Caco-2 (cell line): ENCODE measurements at regions of chr10 and their contacts with region 1.

Region 1: DNA sequence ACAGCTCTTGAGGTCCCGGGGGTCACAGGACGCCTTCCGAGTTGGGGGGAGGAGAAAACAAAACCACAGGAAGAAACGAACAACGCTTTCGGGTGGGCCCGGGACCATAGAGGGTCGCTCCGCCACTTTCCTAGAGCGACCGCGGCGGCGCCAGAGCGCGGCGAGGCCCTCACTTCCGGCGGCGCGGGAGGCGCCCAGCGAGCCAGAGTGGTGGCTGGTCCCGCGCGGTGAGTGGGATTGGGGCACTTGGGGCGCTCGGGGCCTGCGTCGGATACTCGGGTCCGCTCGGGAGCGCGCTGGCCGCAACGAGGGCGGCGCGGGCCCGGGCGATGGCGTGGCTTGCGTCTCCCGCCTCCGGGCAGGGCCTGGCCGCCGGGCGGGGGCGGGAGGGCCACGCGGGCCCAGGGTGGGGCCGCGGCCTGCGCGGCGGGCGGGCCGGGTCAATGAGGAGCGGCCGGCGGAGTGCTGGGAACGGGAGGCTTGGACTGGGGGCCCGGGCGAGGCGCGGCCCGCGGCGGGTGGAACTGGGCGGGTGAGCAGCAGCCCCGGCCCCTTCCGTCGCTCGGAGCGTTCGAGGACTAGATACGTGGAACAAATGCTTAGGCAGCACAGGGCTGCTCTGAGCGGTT is at the start of gene ZNF22:
- DNase-seq: peak; percentile 86 to 91
- H3K4me3 ChIP-seq: peak within 1 kb of the TSS; percentile 84
- H3K4me3 Mint-ChIP-seq: peak within 1 kb of the TSS; percentile 82
- H3K27ac Mint-ChIP-seq: peak within 1 kb of the TSS; percentile 94
- H3K4me1 ChIP-seq: peaks cover 31% of the 10 kb centered on the region
- H3K4me1 Mint-ChIP-seq: peaks cover 28% of the 10 kb centered on the region
- H3K27me3 ChIP-seq: no peaks in the 10 kb centered on the region
- H3K27me3 Mint-ChIP-seq: no peaks in the 10 kb centered on the region
- CTCF ChIP-seq: peak in 1 of 2 experiments; percentile 35
- total RNA-seq, gene ZNF22: 46.5 and 60.8 TPM in 2 replicates

Region 2: DNA sequence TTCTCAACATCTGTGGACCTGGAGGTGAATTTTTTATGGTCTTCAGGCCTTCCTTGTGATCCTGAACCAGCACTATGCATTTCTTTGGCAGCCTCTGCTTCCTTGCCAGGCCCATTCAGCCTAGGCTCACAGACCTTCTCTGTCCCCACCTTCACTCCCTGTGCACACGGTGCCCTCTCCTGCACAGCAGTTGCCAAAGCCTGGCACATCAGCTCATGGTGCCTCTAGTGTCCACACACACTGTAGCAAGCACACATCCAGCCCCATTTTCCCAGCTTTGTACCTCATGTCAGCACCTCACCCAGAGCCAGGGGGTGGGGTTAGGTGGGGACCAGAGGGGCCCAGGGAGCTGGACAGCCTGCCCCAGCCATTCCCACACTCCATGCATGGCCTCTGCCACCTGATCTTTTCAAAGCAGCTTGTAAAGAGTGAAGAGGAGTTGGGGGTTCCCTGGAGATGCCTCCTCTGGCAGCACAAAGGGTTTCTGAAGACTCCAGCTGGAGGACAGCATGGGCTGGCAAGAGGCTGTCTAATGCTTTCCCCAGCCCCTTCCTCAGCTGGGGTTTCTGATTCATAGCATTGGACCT is 147.6 kb before region 1 on chr10:
- CTCF ChIA-PET with region 1: no interaction called
- POLR2A ChIA-PET with region 1: no interaction called
- intact Hi-C with region 1: no loop called
- DNase-seq: no peak
- H3K4me3 ChIP-seq: no peak overlapping the region
- H3K4me3 Mint-ChIP-seq: no peak overlapping the region
- H3K27ac Mint-ChIP-seq: no peak overlapping the region
- H3K4me1 ChIP-seq: no peaks in the 10 kb centered on the region
- H3K4me1 Mint-ChIP-seq: no peaks in the 10 kb centered on the region
- H3K27me3 ChIP-seq: peaks cover 2% of the 10 kb centered on the region; the same call in 1 of the 2 replicates
- H3K27me3 Mint-ChIP-seq: peaks cover 5% of the 10 kb centered on the region
- CTCF ChIP-seq: no peak

Region 3: GRCh38 chr10:44959247-44960087 is 41.4 kb before region 1 on chr10 and contains the start of gene RASSF4:
- CTCF ChIA-PET with region 1: interaction called, 4 read pairs
- POLR2A ChIA-PET with region 1: interaction called, 3 read pairs
- intact Hi-C with region 1: loop called (anchors 2 kb)
- DNase-seq: peak; percentile 97 to 99
- H3K4me3 ChIP-seq: peak within 1 kb of the TSS; percentile 82
- H3K4me3 Mint-ChIP-seq: peak within 1 kb of the TSS; percentile 78
- H3K27ac Mint-ChIP-seq: peak within 1 kb of the TSS; percentile 79
- H3K4me1 ChIP-seq: peaks cover 41% of the 10 kb centered on the region
- H3K4me1 Mint-ChIP-seq: peaks cover 40% of the 10 kb centered on the region
- H3K27me3 ChIP-seq: no peaks in the 10 kb centered on the region
- H3K27me3 Mint-ChIP-seq: no peaks in the 10 kb centered on the region
- CTCF ChIP-seq: no peak
- total RNA-seq, gene RASSF4: 40.8 and 55.6 TPM in 2 replicates

Region 4: GRCh38 chr10:45023426-45023825 is 22.6 kb after region 1 on chr10:
- CTCF ChIA-PET with region 1: no interaction called
- POLR2A ChIA-PET with region 1: interaction called, 17 read pairs
- intact Hi-C with region 1: no loop called
- DNase-seq: no peak
- H3K4me3 ChIP-seq: no peak overlapping the region
- H3K4me3 Mint-ChIP-seq: no peak overlapping the region
- H3K27ac Mint-ChIP-seq: no peak overlapping the region
- H3K4me1 ChIP-seq: no peaks in the 10 kb centered on the region
- H3K4me1 Mint-ChIP-seq: no peaks in the 10 kb centered on the region
- H3K27me3 ChIP-seq: no peaks in the 10 kb centered on the region
- H3K27me3 Mint-ChIP-seq: peaks cover 2% of the 10 kb centered on the region
- CTCF ChIP-seq: no peak

Region 5: DNA sequence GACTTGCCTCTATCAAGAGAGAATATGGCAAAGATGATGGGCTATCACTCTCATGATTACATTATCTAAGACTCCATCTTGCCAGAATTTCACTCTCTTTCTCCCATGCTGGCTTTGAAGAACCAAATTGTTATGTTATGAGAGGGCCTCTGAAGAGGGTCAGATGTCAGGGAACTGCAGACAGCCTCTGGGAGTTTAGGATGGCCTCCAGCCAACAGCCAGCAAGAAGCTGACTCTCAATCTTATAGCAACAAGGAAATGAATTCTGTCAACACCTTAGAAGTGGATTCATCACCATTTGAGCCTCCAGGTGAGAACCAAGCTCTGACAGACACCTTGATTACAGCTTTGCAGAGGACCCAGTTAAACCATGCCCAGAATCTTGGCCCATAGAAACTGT is 33.4 kb after region 1 on chr10:
- CTCF ChIA-PET with region 1: no interaction called
- POLR2A ChIA-PET with region 1: no interaction called
- intact Hi-C with region 1: no loop called
- DNase-seq: no peak
- H3K4me3 ChIP-seq: no peak overlapping the region
- H3K4me3 Mint-ChIP-seq: no peak overlapping the region
- H3K27ac Mint-ChIP-seq: no peak overlapping the region
- H3K4me1 ChIP-seq: no peaks in the 10 kb centered on the region
- H3K4me1 Mint-ChIP-seq: no peaks in the 10 kb centered on the region
- H3K27me3 ChIP-seq: no peaks in the 10 kb centered on the region
- H3K27me3 Mint-ChIP-seq: peaks cover 4% of the 10 kb centered on the region
- CTCF ChIP-seq: no peak